Activated T-helper 1 cell treated with anti-CD3 and anti-CD28 coated beads, Interleukin-12 subunit alpha, Interleukin-12 subunit beta, Interleukin-2, Interleukin-4 antibody, amounts not matched to agents 30 ng/mL and 10 ng/mL and 1 ng/mL, durations not matched to agents 14 hours and 24 hours and 36 hours (primary cell): ENCODE measurements at regions of chr19 and their contacts with region 1.

Region 1: GRCh38 chr19:13150187-13150930 is at the starts of genes IER2 and STX10:
- DNase-seq: peak; percentile 92
- H3K4me3 Mint-ChIP-seq: peak within 1 kb of the TSS; percentile 95
- H3K27ac Mint-ChIP-seq: peak within 1 kb of the TSS; percentile 94
- H3K4me1 Mint-ChIP-seq: peaks cover 29% of the 10 kb centered on the region
- H3K27me3 Mint-ChIP-seq: peaks cover 2% of the 10 kb centered on the region
- total RNA-seq, gene IER2: 173 and 175 TPM in 2 replicates
- total RNA-seq, gene STX10: 73.8 and 78.1 TPM in 2 replicates

Region 2: GRCh38 chr19:12945479-12946091 is 204.8 kb before region 1 on chr19 and contains the start of gene RAD23A:
- intact Hi-C with region 1: loop called (anchors 2 kb)
- DNase-seq: peak; percentile 98
- H3K4me3 Mint-ChIP-seq: peak within 1 kb of the TSS; percentile 92
- H3K27ac Mint-ChIP-seq: peak within 1 kb of the TSS; percentile 94
- H3K4me1 Mint-ChIP-seq: peaks cover 48% of the 10 kb centered on the region
- H3K27me3 Mint-ChIP-seq: no peaks in the 10 kb centered on the region
- total RNA-seq, gene RAD23A: 197 and 202 TPM in 2 replicates

Region 3: DNA sequence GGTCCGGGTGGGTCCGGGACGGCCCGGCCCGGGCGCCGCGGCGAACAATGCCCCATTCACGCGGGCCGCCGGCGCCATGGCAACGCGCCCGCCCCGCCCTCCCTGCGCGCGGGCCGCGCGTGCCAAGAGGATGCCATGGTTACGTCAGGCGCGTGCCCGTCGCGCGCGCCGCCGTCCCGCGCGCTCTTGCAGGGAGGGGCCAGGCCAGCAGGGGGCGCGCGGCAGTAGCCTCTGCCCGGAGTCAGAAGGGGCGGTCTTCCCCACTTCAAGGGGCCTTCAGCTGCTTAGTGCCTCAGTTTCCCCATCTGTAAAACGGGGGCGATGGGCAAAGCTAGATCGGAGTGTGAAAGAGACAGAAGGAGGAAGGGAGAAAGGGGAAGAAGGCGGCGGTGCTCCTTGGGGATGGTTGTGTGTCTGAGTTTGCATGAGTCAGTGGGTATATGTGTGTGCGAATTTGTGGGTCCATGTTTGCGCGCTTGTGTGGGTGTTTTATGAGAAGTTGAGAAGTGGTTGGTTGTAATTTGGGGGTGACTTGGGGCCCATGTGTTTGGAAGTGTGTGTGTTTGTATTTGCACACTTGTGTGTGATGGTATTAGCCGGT is 166.7 kb before region 1 on chr19:
- intact Hi-C with region 1: no loop called
- DNase-seq: peak; percentile 76
- H3K4me3 Mint-ChIP-seq: no peak overlapping the region
- H3K27ac Mint-ChIP-seq: no peak overlapping the region
- H3K4me1 Mint-ChIP-seq: no peaks in the 10 kb centered on the region
- H3K27me3 Mint-ChIP-seq: peaks cover 6% of the 10 kb centered on the region

Region 4: DNA sequence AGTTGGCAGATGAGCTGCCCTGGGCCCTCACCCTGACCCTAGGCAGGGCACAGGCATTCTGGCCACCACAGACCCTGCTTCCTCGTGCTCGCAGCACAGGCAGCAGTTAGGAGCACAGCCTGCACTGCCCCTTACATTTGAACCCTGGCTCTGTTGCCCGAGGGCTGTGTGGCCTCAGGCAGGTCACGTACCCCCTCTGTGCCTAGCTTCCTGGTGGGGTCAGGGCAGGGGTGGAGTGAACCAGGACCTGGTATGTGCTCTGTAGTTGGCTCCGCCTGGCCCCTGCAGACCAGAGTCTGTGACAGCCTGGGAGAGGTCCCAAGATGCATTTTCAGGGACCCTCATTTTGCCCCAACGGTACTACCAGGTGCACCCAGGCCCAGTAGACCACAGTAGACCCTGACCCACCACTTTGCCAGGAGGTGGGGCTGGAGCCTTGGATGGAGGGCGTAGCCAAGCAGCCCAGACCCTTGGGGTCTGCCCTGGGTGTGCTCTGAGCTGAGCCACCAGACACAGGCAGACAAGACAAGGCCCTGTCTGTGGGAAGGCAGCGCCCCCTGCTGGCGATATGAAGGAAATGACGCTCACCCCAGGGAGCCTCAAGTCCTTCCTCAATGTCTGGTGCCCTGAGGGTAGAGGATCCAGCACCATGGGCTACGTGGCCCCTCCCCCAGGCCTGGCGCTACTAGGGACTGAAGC is 56.8 kb before region 1 on chr19:
- intact Hi-C with region 1: no loop called
- DNase-seq: peak; percentile 63
- H3K4me3 Mint-ChIP-seq: no peak overlapping the region
- H3K27ac Mint-ChIP-seq: no peak overlapping the region
- H3K4me1 Mint-ChIP-seq: peaks cover 12% of the 10 kb centered on the region
- H3K27me3 Mint-ChIP-seq: peaks cover 19% of the 10 kb centered on the region

Region 5: GRCh38 chr19:13132471-13133180 is 17.7 kb before region 1 on chr19:
- intact Hi-C with region 1: loop called (anchors 1 kb)
- DNase-seq: peak; percentile 46
- H3K4me3 Mint-ChIP-seq: peak overlapping the region; percentile 77
- H3K27ac Mint-ChIP-seq: peak overlapping the region; percentile 90
- H3K4me1 Mint-ChIP-seq: peaks cover 41% of the 10 kb centered on the region
- H3K27me3 Mint-ChIP-seq: no peaks in the 10 kb centered on the region

Region 6: DNA sequence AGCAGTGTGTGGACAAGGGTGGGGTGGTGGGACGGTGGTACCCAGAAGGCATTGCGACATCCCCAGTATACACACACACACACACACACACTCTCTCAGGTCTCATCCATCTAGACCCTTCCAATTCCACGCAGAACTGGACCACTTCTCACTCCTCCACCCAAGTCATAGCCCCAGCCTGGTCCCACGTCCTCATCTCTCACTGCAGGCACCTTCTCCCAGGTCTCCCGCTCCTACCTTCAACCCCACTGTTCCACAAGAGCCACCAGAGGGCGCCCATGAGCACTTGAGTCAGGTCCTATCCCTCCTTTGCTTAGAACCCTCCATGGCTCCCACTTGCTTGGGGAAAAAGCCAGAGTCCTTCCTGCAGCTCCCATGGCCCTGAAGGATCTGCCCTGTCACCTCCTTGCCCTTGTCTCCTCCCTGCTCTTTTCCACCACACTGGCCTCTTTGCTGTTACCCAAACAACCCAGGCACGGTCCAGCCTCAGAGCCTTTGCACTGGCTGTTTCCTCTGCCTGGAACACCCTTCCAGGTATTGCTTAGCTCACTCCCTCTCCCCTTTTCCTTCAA is 62.5 kb after region 1 on chr19:
- intact Hi-C with region 1: loop called (anchors 1 kb)
- DNase-seq: peak; percentile 59
- H3K4me3 Mint-ChIP-seq: no peak overlapping the region
- H3K27ac Mint-ChIP-seq: peak overlapping the region; percentile 41
- H3K4me1 Mint-ChIP-seq: peaks cover 24% of the 10 kb centered on the region
- H3K27me3 Mint-ChIP-seq: peaks cover 4% of the 10 kb centered on the region

Region 7: DNA sequence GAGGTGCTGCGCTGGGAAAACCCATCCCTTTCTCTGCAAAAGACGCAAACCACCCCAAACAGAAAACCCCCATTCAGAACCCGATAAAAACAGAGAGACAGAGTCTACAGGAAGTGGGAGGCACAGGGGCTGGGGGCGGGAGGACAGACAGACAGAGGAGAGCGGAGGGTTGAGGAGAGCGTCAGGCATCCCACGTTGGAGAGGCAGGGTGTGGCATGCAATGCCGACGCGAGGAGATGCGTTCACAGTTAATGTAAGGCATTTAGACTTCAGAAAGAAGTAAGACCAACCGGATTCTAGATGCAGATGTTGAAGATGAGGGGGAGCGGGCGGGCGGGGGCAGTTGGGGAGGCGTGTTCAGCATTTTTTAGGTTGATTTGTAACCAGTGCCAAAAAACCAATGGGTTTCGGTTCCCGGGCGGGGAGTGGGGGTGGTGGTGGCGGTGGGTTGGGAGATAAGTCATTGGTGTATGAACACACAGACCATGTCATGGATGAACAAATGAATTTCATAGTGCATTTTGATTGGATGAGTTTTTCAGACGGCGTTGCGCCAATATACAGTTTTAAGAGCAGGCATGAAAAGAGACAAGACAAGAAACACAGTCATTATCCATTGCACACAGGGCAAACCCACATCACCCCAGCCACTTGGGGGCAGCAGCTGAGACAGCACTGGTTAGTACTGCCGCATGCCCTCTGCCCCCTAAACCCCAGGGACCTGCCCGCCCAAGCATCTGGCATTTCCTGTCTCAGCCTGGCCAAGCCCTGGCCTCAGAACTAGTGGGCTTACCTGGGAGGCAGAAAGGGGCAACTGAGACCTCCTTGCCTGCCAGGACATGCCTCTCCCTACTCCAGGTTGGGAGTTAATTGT is 91.1 kb after region 1 on chr19:
- intact Hi-C with region 1: no loop called
- DNase-seq: no peak
- H3K4me3 Mint-ChIP-seq: no peak overlapping the region
- H3K27ac Mint-ChIP-seq: peak overlapping the region; percentile 7
- H3K4me1 Mint-ChIP-seq: peaks cover 10% of the 10 kb centered on the region
- H3K27me3 Mint-ChIP-seq: peaks cover 4% of the 10 kb centered on the region

Region 8: GRCh38 chr19:13347367-13347766 is 197.0 kb after region 1 on chr19:
- intact Hi-C with region 1: no loop called
- DNase-seq: no peak
- H3K4me3 Mint-ChIP-seq: no peak overlapping the region
- H3K27ac Mint-ChIP-seq: no peak overlapping the region
- H3K4me1 Mint-ChIP-seq: no peaks in the 10 kb centered on the region
- H3K27me3 Mint-ChIP-seq: no peaks in the 10 kb centered on the region

Region 9: DNA sequence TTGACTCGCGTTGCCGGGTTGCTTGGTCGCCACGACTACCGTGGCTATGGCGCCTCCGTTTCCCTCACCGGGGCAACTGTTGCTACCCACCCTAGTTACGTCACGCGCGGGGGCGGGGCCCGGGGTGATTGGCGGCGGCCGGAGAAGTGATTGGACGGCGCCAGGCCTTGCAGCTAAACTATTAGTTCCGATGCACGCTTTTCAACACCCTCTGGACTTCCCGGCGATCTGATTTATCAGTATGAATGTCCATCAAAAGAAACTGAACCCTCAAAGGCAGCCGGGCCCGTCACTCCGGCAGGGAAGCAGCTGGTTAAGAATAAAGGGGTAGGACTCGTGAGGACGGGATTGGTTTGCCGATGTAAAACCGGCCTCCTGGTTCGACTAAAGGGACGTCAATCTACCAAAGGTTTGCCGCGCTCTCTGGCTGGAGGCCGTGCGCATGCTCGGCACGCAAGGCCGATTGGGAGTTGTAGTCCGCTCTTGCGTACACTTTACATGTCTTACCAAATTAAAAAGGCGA is 855.9 kb after region 1 on chr19 and contains the start of gene RFX1:
- intact Hi-C with region 1: loop called (anchors 10 kb)
- DNase-seq: peak; percentile 99
- H3K4me3 Mint-ChIP-seq: peak within 1 kb of the TSS; percentile 87
- H3K27ac Mint-ChIP-seq: peak within 1 kb of the TSS; percentile 99
- H3K4me1 Mint-ChIP-seq: peaks cover 35% of the 10 kb centered on the region
- H3K27me3 Mint-ChIP-seq: peaks cover 2% of the 10 kb centered on the region
- total RNA-seq, gene RFX1: 16.0 and 17.0 TPM in 2 replicates

Region 10: DNA sequence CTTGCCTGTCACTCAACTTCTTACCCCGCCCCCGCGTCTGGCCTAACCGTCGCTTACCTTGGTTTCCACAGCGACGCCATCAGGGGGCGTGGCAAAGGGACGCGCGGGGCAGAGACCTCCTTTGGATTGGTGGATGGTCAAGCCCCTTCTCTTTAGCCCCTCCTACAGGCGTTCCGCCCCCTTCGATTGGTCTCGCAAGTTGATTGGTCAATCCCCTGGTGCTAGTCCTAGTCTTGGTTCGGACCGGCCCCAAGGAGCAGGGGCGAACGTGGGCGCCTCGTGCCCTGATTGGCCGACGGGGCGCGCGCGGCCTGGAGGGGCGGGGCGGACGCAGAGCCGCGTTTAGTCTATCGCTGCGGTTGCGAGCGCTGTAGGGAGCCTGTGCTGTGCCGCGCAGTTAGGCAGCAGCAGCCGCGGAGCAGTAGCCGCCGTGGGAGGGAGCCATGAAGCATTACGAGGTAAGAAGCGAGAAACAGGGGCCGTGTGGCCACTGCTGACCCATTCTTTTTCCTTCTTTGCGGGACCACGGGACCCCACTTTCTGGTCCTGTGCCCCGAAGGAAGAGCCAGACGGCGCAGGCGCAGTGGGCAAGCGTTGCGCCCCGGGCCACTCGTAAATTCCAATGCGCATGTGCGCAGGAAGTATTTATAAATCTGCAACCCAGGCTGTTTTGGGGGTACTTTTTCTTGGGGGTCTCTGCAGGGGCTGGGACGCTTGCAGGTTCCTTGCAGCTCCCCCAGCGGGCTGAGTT is 1379.1 kb after region 1 on chr19 and contains the start of gene TECR:
- intact Hi-C with region 1: loop called (anchors 10 kb)
- DNase-seq: peak; percentile 100
- H3K4me3 Mint-ChIP-seq: peak within 1 kb of the TSS; percentile 96
- H3K27ac Mint-ChIP-seq: peak within 1 kb of the TSS; percentile 97
- H3K4me1 Mint-ChIP-seq: peaks cover 13% of the 10 kb centered on the region
- H3K27me3 Mint-ChIP-seq: no peaks in the 10 kb centered on the region
- total RNA-seq, gene TECR: 110 and 120 TPM in 2 replicates